Posterior vena cava (tissue), 2 donors: ENCODE measurements at regions of chr4 and their contacts with region 1.

Region 1: DNA sequence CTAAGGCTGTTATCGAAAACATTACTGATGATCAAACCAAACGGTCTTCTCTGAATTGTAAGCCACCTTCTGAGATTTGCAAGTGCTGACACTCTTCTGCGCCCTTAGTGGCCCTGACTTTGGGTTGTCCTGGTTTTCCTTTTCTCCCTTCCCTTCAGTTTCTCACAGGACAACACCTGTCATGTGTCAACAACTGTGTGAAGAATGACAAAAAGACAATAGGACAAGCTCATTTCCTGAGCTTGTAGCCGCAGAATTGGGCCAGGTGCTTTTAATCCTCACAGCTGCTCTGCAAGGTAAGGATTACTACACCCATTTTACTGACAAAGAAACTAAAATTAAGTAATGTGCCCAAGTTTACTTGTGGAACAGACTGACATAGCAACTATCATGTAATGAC is 44.9 kb upstream of the TXK start:
- DNase-seq: no peak

Region 2: GRCh38 chr4:47873877-47874541 is 304.9 kb before region 1 on chr4:
- intact Hi-C with region 1: loop called in 1 of 2 experiments (anchors 2 kb)
- DNase-seq: no peak

Region 3: DNA sequence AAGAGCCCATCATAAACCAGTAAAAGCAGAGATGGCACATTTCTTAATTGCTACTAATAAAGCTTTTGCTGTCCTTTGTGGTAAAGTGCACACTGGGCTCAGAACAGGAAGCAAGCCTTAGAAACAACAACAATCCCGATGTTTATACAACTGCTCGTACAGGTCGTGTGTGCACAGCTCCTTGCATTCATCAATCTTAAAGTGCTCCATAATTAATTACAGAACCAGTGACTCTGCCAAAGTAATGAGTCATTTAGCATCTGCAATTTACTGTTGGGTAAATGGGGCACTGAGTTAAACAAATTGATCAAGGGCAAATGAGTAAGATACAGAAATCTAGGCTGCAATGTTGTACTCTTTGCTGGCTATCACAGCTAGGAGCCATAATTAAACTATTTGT is 16.4 kb after region 1 on chr4:
- intact Hi-C with region 1: no loop called
- DNase-seq: no peak